Vagina (tissue), 2 donors: ENCODE measurements at regions of chr12 and their contacts with region 1.

Region 1: GRCh38 chr12:42023733-42024494 is 120.8 kb downstream of the GXYLT1 start:
- DNase-seq: no peak
- H3K4me3 ChIP-seq: peak overlapping the region; percentile 17 to 39
- H3K27ac ChIP-seq: no peak overlapping the region
- H3K4me1 ChIP-seq: peaks cover 7% of the 10 kb centered on the region
- H3K27me3 ChIP-seq: no peaks in the 10 kb centered on the region
- CTCF ChIP-seq: peak; percentile 81 to 90 (median 83)
- POLR2A ChIP-seq: no peak

Region 2: DNA sequence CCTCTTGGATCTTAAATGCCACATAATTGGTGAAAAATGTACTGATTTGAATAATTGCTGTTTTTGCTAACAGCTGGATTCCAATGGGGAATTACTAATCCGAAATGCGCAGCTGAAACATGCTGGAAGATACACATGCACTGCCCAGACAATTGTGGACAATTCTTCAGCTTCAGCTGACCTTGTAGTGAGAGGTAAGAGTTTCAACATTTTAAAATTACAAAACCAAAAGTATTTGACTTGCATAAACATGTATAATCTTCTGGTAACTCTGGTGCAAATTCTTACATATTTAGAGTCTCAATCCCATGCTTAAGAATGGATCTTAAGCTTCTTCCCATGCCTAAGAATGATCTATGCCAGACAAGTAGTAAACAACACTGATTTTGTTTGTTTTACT is 1064.9 kb before region 1 on chr12:
- intact Hi-C with region 1: loop called (anchors 5 kb)
- DNase-seq: no peak
- H3K4me3 ChIP-seq: no peak overlapping the region
- H3K27ac ChIP-seq: no peak overlapping the region
- H3K4me1 ChIP-seq: no peaks in the 10 kb centered on the region
- H3K27me3 ChIP-seq: no peaks in the 10 kb centered on the region
- CTCF ChIP-seq: no peak
- POLR2A ChIP-seq: no peak

Region 3: DNA sequence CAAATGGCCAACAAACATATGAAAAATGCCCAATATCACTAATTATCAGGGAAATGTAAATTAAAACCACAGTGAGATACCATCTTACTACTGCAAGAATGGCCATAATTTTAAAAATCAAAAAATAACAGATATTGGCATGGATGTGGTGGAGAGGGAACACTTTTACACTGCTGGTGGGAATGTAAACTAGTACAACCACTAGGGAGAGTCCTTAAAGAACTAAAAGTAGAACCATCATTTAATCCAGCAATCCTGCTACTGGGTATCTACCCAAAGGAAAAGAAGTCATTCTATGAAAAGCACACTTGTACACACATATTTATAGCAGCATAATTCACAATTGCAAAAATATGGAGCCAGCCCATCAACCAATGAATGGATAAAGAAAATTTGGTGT is 338.9 kb before region 1 on chr12:
- intact Hi-C with region 1: loop called (anchors 10 kb)
- DNase-seq: no peak
- H3K4me3 ChIP-seq: no peak overlapping the region
- H3K27ac ChIP-seq: no peak overlapping the region
- H3K4me1 ChIP-seq: no peaks in the 10 kb centered on the region
- H3K27me3 ChIP-seq: no peaks in the 10 kb centered on the region
- CTCF ChIP-seq: peak in 1 of 3 experiments; percentile 30
- POLR2A ChIP-seq: no peak

Region 4: GRCh38 chr12:41944222-41944621 is 79.7 kb before region 1 on chr12:
- intact Hi-C with region 1: no loop called
- DNase-seq: no peak
- H3K4me3 ChIP-seq: no peak overlapping the region
- H3K27ac ChIP-seq: no peak overlapping the region
- H3K4me1 ChIP-seq: no peaks in the 10 kb centered on the region
- H3K27me3 ChIP-seq: no peaks in the 10 kb centered on the region
- CTCF ChIP-seq: no peak
- POLR2A ChIP-seq: no peak

Region 5: GRCh38 chr12:42552822-42553221 is 528.9 kb after region 1 on chr12:
- intact Hi-C with region 1: no loop called
- DNase-seq: no peak
- H3K4me3 ChIP-seq: no peak overlapping the region
- H3K27ac ChIP-seq: no peak overlapping the region
- H3K4me1 ChIP-seq: no peaks in the 10 kb centered on the region
- H3K27me3 ChIP-seq: no peaks in the 10 kb centered on the region
- CTCF ChIP-seq: no peak
- POLR2A ChIP-seq: no peak